Left ventricle myocardium inferior (tissue), 1 donor: ENCODE measurements at regions of chr13 and their contacts with region 1.

Region 1: GRCh38 chr13:94233401-94233800 is 246.1 kb downstream of the DCT start:
- DNase-seq: peak; percentile 20
- H3K4me3 ChIP-seq: no peak overlapping the region
- H3K27ac ChIP-seq: no peak overlapping the region
- H3K4me1 ChIP-seq: no peaks in the 10 kb centered on the region
- H3K27me3 ChIP-seq: no peaks in the 10 kb centered on the region
- CTCF ChIP-seq: no peak

Region 2: GRCh38 chr13:93416736-93417355 is 816.6 kb before region 1 on chr13:
- intact Hi-C with region 1: loop called (anchors 5 kb)
- DNase-seq: no peak
- H3K4me3 ChIP-seq: no peak overlapping the region
- H3K27ac ChIP-seq: no peak overlapping the region
- H3K4me1 ChIP-seq: no peaks in the 10 kb centered on the region
- H3K27me3 ChIP-seq: no peaks in the 10 kb centered on the region
- CTCF ChIP-seq: no peak

Region 3: GRCh38 chr13:94079876-94080275 is 153.5 kb before region 1 on chr13:
- intact Hi-C with region 1: no loop called
- DNase-seq: no peak
- H3K4me3 ChIP-seq: no peak overlapping the region
- H3K27ac ChIP-seq: no peak overlapping the region
- H3K4me1 ChIP-seq: no peaks in the 10 kb centered on the region
- H3K27me3 ChIP-seq: no peaks in the 10 kb centered on the region
- CTCF ChIP-seq: no peak

Region 4: DNA sequence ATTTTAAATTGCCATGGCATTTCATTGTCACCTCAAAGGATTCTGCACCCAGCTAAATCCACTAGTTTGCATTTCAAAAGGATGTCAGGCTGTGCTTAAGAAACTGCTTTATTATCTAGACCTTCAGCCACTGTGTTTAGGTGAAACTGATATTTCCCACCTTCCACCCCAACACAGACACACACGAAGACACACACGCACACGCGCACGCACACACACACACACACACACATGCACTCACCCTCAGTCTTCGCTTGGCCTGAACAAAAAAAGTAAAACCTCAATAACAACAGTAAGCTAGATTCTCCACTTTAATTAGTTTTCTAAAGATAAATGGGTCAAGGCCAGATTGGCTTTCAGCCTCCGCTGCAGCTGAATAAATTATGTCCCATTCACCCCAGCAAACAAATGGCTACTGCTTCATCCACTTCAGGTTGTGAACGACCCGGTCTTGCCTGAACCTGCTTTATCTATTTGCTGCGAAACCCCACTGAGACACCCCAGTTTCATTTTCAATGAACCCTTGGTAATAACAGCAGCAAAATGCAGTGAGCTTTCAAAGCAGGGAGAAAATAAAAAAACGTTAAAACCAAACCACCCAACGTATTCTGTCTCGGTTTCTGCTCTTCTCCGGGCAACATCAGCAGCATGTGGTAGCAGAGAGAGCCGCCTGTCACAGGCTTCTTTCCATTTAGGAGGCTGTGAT is 79.3 kb after region 1 on chr13:
- intact Hi-C with region 1: no loop called
- DNase-seq: no peak
- H3K4me3 ChIP-seq: no peak overlapping the region
- H3K27ac ChIP-seq: peak overlapping the region; percentile 51
- H3K4me1 ChIP-seq: peaks cover 21% of the 10 kb centered on the region
- H3K27me3 ChIP-seq: no peaks in the 10 kb centered on the region
- CTCF ChIP-seq: no peak